ENCODE measurements at regions of chr9 and their contacts with region 1.

Region 1: GRCh38 chr9:83334320-83334719 is 203.9 kb downstream of the FRMD3 start:
- DNase-seq: peak; percentile 84
- H3K4me3 ChIP-seq: no peak overlapping the region
- H3K27ac ChIP-seq: no peak overlapping the region
- H3K4me1 ChIP-seq: no peaks in the 10 kb centered on the region
- H3K27me3 ChIP-seq: no peaks in the 10 kb centered on the region
- CTCF ChIP-seq: peak; percentile 93

Region 2: DNA sequence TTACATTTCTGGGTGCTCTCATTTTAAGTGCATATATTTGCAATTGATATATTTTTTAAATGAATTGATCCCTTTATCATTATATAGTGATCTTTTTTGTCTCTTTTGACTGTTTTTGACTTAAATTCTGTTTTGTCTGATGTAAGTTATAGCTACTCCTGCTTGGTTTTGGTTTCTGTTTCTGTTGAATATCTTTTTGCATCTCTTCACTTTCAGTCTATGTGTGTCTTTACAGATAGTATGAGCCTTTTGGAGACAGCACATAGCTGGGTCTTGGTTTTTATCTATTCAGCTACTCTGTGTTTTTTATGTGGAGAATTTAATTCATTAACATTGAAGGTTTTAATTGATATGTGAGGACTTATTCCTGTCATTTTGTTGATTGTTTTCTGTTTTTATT is 1034.5 kb before region 1 on chr9:
- CTCF ChIA-PET with region 1: no interaction called
- POLR2A ChIA-PET with region 1: no interaction called
- intact Hi-C with region 1: no loop called
- DNase-seq: no peak
- H3K4me3 ChIP-seq: no peak overlapping the region
- H3K27ac ChIP-seq: no peak overlapping the region
- H3K4me1 ChIP-seq: no peaks in the 10 kb centered on the region
- H3K27me3 ChIP-seq: no peaks in the 10 kb centered on the region
- CTCF ChIP-seq: no peak

Region 3: GRCh38 chr9:83544002-83544698 is 209.8 kb after region 1 on chr9:
- CTCF ChIA-PET with region 1: interaction called, 36 read pairs
- POLR2A ChIA-PET with region 1: interaction called, 10 read pairs
- intact Hi-C with region 1: loop called (anchors 1 kb)
- DNase-seq: peak; percentile 82
- H3K4me3 ChIP-seq: no peak overlapping the region
- H3K27ac ChIP-seq: no peak overlapping the region
- H3K4me1 ChIP-seq: no peaks in the 10 kb centered on the region
- H3K27me3 ChIP-seq: peaks cover 27% of the 10 kb centered on the region
- CTCF ChIP-seq: peak; percentile 80

Region 4: GRCh38 chr9:83596896-83597504 is 262.7 kb after region 1 on chr9:
- CTCF ChIA-PET with region 1: no interaction called
- POLR2A ChIA-PET with region 1: no interaction called
- intact Hi-C with region 1: loop called (anchors 5 kb)
- DNase-seq: peak; percentile 54
- H3K4me3 ChIP-seq: no peak overlapping the region
- H3K27ac ChIP-seq: no peak overlapping the region
- H3K4me1 ChIP-seq: peaks cover 3% of the 10 kb centered on the region
- H3K27me3 ChIP-seq: no peaks in the 10 kb centered on the region
- CTCF ChIP-seq: peak; percentile 81

Region 5: GRCh38 chr9:83920927-83921707 is 586.8 kb after region 1 on chr9 and contains the start of gene KIF27:
- CTCF ChIA-PET with region 1: interaction called, 3 read pairs
- POLR2A ChIA-PET with region 1: no interaction called
- intact Hi-C with region 1: loop called (anchors 10 kb)
- DNase-seq: peak; percentile 97
- H3K4me3 ChIP-seq: peak within 1 kb of the TSS; percentile 93
- H3K27ac ChIP-seq: peak within 1 kb of the TSS; percentile 95
- H3K4me1 ChIP-seq: no peaks in the 10 kb centered on the region
- H3K27me3 ChIP-seq: no peaks in the 10 kb centered on the region
- CTCF ChIP-seq: peak; percentile 49
- total RNA-seq, gene KIF27: 8.5 and 9.2 TPM in 2 replicates

Measured in A673 (cell line).